Colonic mucosa (tissue), 4 donors: ENCODE measurements at regions of chr21 and their contacts with region 1.

Region 1: GRCh38 chr21:33162436-33162951 is 67.2 kb upstream of the IFNAR2 start:
- DNase-seq: no peak
- H3K4me3 ChIP-seq: no peak overlapping the region
- H3K27ac ChIP-seq: no peak overlapping the region
- H3K4me1 ChIP-seq: no peaks in the 10 kb centered on the region
- H3K27me3 ChIP-seq: no peaks in the 10 kb centered on the region
- CTCF ChIP-seq: no peak

Region 2: DNA sequence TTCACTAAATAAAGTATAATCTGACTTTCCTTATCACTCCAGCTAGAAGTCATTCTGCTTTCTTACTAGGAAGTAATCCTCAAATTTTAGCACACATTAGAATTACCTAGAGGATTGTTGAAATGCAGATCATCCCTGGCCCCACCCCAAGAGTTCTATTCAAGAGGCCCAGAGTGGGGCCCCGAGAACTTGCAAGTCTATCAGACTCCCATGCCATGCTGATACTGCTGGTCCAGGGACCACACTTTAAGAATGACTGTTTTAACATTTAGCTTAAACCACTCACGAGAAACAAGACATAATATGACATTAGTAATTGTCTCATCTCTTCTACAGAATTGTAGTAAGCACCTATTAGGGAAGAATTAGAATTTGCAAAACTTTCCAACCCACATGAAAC is 427.0 kb before region 1 on chr21:
- intact Hi-C with region 1: no loop called
- DNase-seq: no peak
- H3K4me3 ChIP-seq: no peak overlapping the region
- H3K27ac ChIP-seq: no peak overlapping the region
- H3K4me1 ChIP-seq: no peaks in the 10 kb centered on the region
- H3K27me3 ChIP-seq: no peaks in the 10 kb centered on the region
- CTCF ChIP-seq: no peak

Region 3: GRCh38 chr21:33036430-33037162 is 125.9 kb before region 1 on chr21:
- intact Hi-C with region 1: loop called (anchors 10 kb)
- DNase-seq: no peak
- H3K4me3 ChIP-seq: no peak overlapping the region
- H3K27ac ChIP-seq: no peak overlapping the region
- H3K4me1 ChIP-seq: no peaks in the 10 kb centered on the region
- H3K27me3 ChIP-seq: peaks cover 20% of the 10 kb centered on the region
- CTCF ChIP-seq: no peak

Region 4: DNA sequence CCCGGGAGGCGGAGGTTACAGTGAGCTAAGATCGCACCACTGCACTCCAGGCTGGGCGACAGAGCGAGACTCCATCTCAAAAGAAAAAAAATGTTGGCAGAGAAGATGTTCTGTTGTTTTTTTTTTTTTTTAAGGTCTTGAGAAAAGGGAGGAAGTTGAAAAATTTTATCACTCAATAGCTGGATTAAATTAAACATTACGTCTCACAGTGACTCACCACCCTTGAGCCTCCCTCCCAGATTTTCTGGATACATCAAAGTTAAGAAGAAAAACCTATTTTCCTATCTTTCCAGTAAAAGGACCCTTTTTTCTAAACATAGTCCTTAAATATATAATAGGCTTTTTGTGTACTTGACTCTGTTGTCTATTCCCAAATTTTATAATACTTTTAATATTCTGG is 197.8 kb after region 1 on chr21:
- intact Hi-C with region 1: no loop called
- DNase-seq: no peak
- H3K4me3 ChIP-seq: no peak overlapping the region
- H3K27ac ChIP-seq: peak overlapping the region; percentile 85
- H3K4me1 ChIP-seq: peaks cover 4% of the 10 kb centered on the region
- H3K27me3 ChIP-seq: no peaks in the 10 kb centered on the region
- CTCF ChIP-seq: no peak